Cardiac septum (tissue), 1 donor: ENCODE measurements at regions of chrX and their contacts with region 1.

Region 1: DNA sequence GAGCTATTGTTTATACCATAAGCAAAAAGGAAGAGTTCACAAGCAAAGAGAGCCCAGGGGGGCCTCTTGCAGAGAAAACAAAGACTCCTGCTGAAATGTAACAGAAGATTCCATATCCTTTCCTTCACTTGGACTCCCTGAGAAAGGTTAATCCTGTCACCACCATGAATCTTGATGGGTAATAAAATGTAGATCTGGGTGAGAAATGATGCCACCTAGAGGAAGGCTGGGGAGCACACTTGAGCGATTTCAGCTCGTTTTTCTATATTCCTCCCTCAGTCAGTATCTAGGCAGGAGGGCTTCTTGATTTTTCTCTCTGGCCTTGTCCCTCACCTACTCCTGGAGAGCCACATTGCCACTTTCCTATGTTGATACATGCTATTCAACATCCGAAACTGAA is 10.2 kb upstream of the KCNE5 start:
- DNase-seq: no peak

Region 2: GRCh38 chrX:109485470-109486340 is 149.5 kb before region 1 on chrX:
- intact Hi-C with region 1: loop called (anchors 5 kb)
- DNase-seq: peak; percentile 78

Region 3: GRCh38 chrX:109536439-109537336 is 98.5 kb before region 1 on chrX and contains the start of gene NXT2:
- intact Hi-C with region 1: loop called (anchors 10 kb)
- DNase-seq: peak; percentile 95
- total RNA-seq, gene NXT2: 1.2 TPM

Region 4: DNA sequence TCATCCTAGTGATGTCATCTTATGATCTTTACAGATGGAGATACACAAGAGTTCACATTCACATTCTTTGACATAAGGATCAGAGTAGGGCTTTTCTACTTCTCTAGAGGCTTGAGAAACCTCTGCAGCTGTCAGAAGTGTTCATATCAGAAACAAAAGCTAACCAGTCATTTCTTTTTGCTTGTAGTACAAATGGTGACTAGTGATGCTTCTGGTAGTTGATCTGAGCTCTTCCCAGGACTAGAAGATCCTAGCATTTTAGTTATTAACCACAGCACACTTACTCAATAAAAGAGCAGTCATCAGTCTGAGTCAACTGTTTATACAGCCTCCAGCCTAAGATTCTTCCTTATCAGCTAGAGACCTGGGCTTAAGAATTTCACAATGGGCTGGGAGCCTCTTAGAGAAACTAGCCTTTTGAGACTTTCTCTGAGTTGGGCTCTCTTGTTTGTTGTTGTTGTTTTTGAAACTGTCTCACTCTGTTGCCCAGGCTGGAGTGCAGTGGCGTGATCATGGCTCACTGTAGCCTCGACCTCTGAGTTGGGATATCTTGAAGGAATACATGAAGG is 451.8 kb after region 1 on chrX:
- intact Hi-C with region 1: no loop called
- DNase-seq: no peak